CD4-positive, alpha-beta memory T cell (primary cell): ENCODE measurements at regions of chr19 and their contacts with region 1.

Region 1: DNA sequence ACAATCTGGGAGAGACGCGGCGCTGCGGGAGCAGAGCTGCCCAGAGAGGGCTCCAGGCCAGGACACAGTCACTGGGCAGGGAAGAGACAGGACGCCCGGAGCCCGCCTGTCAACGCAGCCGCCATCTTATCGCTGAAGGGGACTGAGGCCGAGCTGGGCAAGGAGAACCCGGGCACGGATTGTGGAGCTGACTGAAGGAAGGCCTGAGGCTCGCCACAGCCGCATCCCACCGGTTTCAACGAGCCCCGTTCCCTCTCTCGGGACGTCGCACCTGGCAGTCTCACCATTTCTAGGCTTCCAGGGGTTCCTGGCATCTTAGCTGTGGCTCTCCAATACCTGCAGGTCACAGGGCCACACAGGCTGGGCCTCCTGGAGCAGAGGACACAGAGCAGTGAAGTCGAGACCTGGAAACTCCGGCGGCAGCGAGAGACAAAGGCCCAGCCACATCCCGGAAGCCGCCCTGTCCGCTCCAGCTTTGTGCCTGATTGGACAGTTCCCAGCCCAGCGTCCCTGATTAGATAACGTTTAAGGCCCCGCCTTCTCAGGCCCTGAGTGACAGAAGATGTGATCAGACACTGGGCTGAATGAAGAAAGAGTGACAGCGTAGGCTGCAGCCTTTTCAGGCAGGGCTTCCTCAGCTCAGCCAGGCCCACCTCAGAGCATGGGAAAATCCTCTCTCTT is at the start of gene ZNF91:
- DNase-seq: peak; percentile 88 to 97 (median 93)
- H3K4me3 ChIP-seq: peak within 1 kb of the TSS; percentile 91 to 92
- H3K4me3 Mint-ChIP-seq: peak within 1 kb of the TSS; percentile 98 to 99 (median 98)
- H3K27ac ChIP-seq: peak within 1 kb of the TSS; percentile 99
- H3K27ac Mint-ChIP-seq: peak within 1 kb of the TSS; percentile 98 to 99 (median 98)
- H3K4me1 ChIP-seq: peaks cover 36% of the 10 kb centered on the region
- H3K4me1 Mint-ChIP-seq: peaks cover 24 to 47% (median 33%) of the 10 kb centered on the region in 4 donors
- H3K27me3 ChIP-seq: no peaks in the 10 kb centered on the region
- H3K27me3 Mint-ChIP-seq: no peaks in the 10 kb centered on the region
- total RNA-seq, gene ZNF91: 111 to 113 TPM

Region 2: GRCh38 chr19:23249911-23250649 is 145.1 kb before region 1 on chr19 and contains the start of gene ZNF724:
- CTCF ChIA-PET with region 1: no interaction called
- POLR2A ChIA-PET with region 1: interaction called, 18 read pairs
- intact Hi-C with region 1: loop called (anchors 1 kb)
- DNase-seq: peak; percentile 87 to 93 (median 89)
- H3K4me3 ChIP-seq: peak within 1 kb of the TSS; percentile 78 to 81
- H3K4me3 Mint-ChIP-seq: peak within 1 kb of the TSS; percentile 95 to 98 (median 97)
- H3K27ac ChIP-seq: peak within 1 kb of the TSS; percentile 63
- H3K27ac Mint-ChIP-seq: peak within 1 kb of the TSS; percentile 82 to 96 (median 93)
- H3K4me1 ChIP-seq: peaks cover 8% of the 10 kb centered on the region
- H3K4me1 Mint-ChIP-seq: peaks cover 5 to 18% (median 7%) of the 10 kb centered on the region in 4 donors
- H3K27me3 ChIP-seq: no peaks in the 10 kb centered on the region
- H3K27me3 Mint-ChIP-seq: no peaks in the 10 kb centered on the region
- total RNA-seq, gene ZNF724: 5.5 to 6.1 TPM

Region 3: GRCh38 chr19:23384858-23385257 is 10.3 kb before region 1 on chr19:
- CTCF ChIA-PET with region 1: interaction called, 5 read pairs
- POLR2A ChIA-PET with region 1: interaction called, 16 read pairs
- intact Hi-C with region 1: no loop called
- DNase-seq: no peak
- H3K4me3 ChIP-seq: no peak overlapping the region
- H3K4me3 Mint-ChIP-seq: peak overlapping the region in 3 of 8 donors; percentile 15 to 43 (median 33)
- H3K27ac ChIP-seq: no peak overlapping the region
- H3K27ac Mint-ChIP-seq: no peak overlapping the region
- H3K4me1 ChIP-seq: peaks cover 5% of the 10 kb centered on the region
- H3K4me1 Mint-ChIP-seq: peaks cover 9 to 47% (median 32%) of the 10 kb centered on the region in 4 donors
- H3K27me3 ChIP-seq: no peaks in the 10 kb centered on the region
- H3K27me3 Mint-ChIP-seq: no peaks in the 10 kb centered on the region

Region 4: DNA sequence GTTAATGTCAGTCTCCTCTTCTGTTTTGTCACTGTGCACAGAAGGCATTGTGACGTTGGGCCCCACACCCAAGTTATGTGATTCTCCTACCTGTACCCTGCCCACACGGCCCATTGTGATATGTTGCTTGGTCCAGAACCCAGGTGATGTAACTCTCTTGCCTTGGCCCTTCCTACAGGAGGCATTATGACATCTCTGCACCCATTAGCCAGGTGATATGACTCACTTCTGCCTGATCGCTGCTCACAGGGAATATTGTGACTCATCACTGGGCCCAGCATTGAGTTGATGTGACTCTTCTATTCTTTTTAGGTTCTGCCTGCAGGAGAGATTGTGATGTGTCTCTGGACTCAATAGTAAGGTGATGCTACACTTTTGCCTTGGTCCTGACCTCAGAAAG is 65.5 kb after region 1 on chr19:
- CTCF ChIA-PET with region 1: no interaction called
- POLR2A ChIA-PET with region 1: no interaction called
- intact Hi-C with region 1: no loop called
- DNase-seq: no peak
- H3K4me3 ChIP-seq: no peak overlapping the region
- H3K4me3 Mint-ChIP-seq: no peak overlapping the region
- H3K27ac ChIP-seq: no peak overlapping the region
- H3K27ac Mint-ChIP-seq: no peak overlapping the region
- H3K4me1 ChIP-seq: no peaks in the 10 kb centered on the region
- H3K4me1 Mint-ChIP-seq: no peaks in the 10 kb centered on the region
- H3K27me3 ChIP-seq: no peaks in the 10 kb centered on the region
- H3K27me3 Mint-ChIP-seq: peaks cover 2 to 3% of the 10 kb centered on the region in 2 donors

Region 5: DNA sequence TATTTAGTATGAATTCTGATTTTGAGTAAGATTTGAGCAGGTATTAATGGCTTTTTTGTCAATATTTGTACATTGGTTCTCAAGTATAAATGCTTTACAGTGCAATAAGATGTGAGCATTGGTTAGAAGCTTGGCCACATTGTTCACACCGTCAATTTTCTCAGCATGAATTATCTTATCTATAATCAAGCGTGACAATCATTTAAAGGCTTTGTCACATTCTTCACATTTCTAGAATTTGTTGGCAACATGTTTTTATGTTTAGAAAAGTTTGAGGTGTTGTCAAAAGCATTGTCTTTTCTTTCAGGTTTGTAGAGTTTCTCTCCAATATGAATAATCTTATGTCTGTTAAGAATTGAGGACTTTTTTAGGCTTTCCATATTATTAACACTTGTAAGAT is 96.2 kb after region 1 on chr19:
- CTCF ChIA-PET with region 1: no interaction called
- POLR2A ChIA-PET with region 1: no interaction called
- intact Hi-C with region 1: no loop called
- DNase-seq: no peak
- H3K4me3 ChIP-seq: no peak overlapping the region
- H3K4me3 Mint-ChIP-seq: no peak overlapping the region
- H3K27ac ChIP-seq: no peak overlapping the region
- H3K27ac Mint-ChIP-seq: no peak overlapping the region
- H3K4me1 ChIP-seq: no peaks in the 10 kb centered on the region
- H3K4me1 Mint-ChIP-seq: no peaks in the 10 kb centered on the region
- H3K27me3 ChIP-seq: no peaks in the 10 kb centered on the region
- H3K27me3 Mint-ChIP-seq: no peaks in the 10 kb centered on the region

Region 6: DNA sequence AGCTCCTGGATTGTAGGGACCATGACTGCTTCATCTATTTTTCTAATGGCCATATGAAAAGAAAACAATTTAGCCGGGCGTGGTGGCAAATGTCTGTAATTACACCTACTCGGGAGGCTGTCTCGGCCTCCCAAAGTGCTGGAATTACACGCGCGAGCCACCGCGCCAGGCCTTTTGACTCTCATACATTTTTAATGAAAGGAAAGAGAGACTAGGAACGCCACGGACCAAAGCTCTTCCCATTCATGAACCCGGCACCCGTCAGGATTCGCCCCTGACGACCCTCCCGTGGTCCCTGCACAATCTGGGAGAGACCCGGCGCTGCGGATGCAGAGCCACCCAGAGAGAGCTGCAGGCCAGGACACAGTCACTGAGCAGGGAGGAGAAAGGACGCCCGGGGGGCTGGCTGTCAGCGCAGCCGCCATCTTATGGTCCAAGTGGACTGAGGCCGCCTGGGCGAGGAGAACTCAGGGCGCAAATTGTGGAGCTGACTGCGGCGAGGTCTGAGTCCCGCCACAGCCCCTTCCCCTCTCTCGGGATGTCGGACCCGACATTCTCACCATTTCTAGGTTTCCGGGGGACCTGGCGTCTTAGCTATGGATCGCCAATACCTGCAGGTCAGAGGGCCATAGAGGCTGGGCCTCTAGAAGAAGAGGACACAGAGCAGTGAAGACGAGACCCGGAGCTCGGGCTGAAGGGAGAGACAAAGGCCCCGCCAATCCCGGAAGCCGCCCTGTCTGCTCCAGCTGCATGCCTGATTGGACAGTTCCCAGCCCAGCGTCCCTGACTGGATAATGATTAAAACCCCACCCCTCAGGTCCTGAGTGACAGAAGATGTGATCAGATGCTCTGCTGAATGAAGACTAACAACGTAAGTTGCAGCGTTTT is 363.2 kb after region 1 on chr19 and contains the start of gene ZNF681:
- CTCF ChIA-PET with region 1: interaction called, 5 read pairs
- POLR2A ChIA-PET with region 1: interaction called, 14 read pairs
- intact Hi-C with region 1: loop called (anchors 2 kb)
- DNase-seq: peak; percentile 86 to 95 (median 90)
- H3K4me3 ChIP-seq: peak within 1 kb of the TSS; percentile 80 to 98
- H3K4me3 Mint-ChIP-seq: peak within 1 kb of the TSS; percentile 94 to 98 (median 96)
- H3K27ac ChIP-seq: peak within 1 kb of the TSS; percentile 93
- H3K27ac Mint-ChIP-seq: peak within 1 kb of the TSS; percentile 95 to 99 (median 98)
- H3K4me1 ChIP-seq: peaks cover 17% of the 10 kb centered on the region
- H3K4me1 Mint-ChIP-seq: peaks cover 17 to 47% (median 28%) of the 10 kb centered on the region in 4 donors
- H3K27me3 ChIP-seq: no peaks in the 10 kb centered on the region
- H3K27me3 Mint-ChIP-seq: no peaks in the 10 kb centered on the region
- total RNA-seq, gene ZNF681: 8.0 to 8.3 TPM

Region 7: GRCh38 chr19:24086974-24087595 is 691.9 kb after region 1 on chr19 and contains the start of gene ZNF254:
- CTCF ChIA-PET with region 1: interaction called, 3 read pairs
- POLR2A ChIA-PET with region 1: interaction called, 15 read pairs
- intact Hi-C with region 1: no loop called
- DNase-seq: peak; percentile 65 to 84 (median 74)
- H3K4me3 ChIP-seq: peak within 1 kb of the TSS; percentile 69 to 78
- H3K4me3 Mint-ChIP-seq: peak within 1 kb of the TSS; percentile 93 to 97 (median 96)
- H3K27ac ChIP-seq: peak within 1 kb of the TSS; percentile 73
- H3K27ac Mint-ChIP-seq: peak within 1 kb of the TSS; percentile 89 to 97 (median 95)
- H3K4me1 ChIP-seq: peaks cover 8% of the 10 kb centered on the region
- H3K4me1 Mint-ChIP-seq: peaks cover 4 to 13% (median 8%) of the 10 kb centered on the region in 4 donors
- H3K27me3 ChIP-seq: no peaks in the 10 kb centered on the region
- H3K27me3 Mint-ChIP-seq: no peaks in the 10 kb centered on the region
- total RNA-seq, gene ZNF254: 17.6 to 19.1 TPM